Activated CD4-positive, alpha-beta T cell treated with anti-CD3 and anti-CD28 coated beads for 36 hours (primary cell): ENCODE measurements at regions of chr12 and their contacts with region 1.

Region 1: DNA sequence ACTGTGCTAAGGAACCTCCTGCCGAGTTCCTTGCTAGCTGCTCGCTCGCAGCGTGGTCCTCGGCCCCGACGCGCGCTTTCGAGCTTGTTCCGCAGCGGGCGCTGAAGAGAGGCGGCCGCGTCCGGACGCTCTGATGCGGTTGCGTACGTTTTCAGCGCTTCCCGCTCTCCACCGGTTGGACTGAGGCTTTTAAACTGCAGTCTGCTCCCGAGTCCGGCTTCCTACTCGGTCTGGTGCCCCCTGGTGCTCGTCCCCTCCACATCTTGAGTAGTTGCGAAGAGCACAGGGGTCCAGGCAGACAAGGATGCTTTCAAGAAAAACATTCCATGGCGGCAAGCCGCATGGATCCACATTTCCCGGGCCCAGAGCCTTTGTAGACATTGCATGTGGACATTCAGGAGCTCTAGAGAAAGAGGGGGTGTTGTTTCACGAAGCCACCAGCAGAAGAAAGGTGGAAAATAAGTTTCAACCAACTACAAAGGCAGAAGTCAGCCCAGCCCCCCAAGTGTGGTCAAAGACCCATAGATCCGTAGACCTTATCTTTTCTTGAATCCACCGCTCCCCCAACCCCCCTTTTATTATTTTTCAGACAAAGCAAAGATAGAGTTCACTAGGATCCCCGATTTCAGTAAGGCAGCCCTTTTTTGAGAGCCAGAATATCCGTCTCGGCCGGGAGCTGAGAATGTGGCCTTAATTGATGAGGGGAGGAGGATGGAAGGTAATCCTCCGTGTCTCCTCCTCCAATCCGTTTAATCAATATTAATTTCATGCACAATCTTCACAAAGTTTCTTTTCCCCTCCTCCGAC is 984 bp upstream of the WNK1 start:
- DNase-seq: peak; percentile 93
- ATAC-seq: peak; percentile 50
- H3K4me3 Mint-ChIP-seq: no peak overlapping the region
- H3K27ac Mint-ChIP-seq: no peak overlapping the region
- H3K4me1 Mint-ChIP-seq: peaks cover 17% of the 10 kb centered on the region
- H3K27me3 Mint-ChIP-seq: no peaks in the 10 kb centered on the region

Region 2: GRCh38 chr12:401235-402028 is 350.0 kb before region 1 on chr12 and contains the start of gene CCDC77:
- CTCF ChIA-PET with region 1: no interaction called
- POLR2A ChIA-PET with region 1: no interaction called
- intact Hi-C with region 1: loop called in 1 of 2 experiments (anchors 2 kb)
- DNase-seq: peak; percentile 96
- ATAC-seq: peak; percentile 100
- H3K4me3 Mint-ChIP-seq: no peak within 1 kb of the TSS
- H3K27ac Mint-ChIP-seq: no peak within 1 kb of the TSS
- H3K4me1 Mint-ChIP-seq: peaks cover 5% of the 10 kb centered on the region
- H3K27me3 Mint-ChIP-seq: no peaks in the 10 kb centered on the region
- total RNA-seq, gene CCDC77: 17.3 to 18.7 TPM

Region 3: GRCh38 chr12:614411-614970 is 136.9 kb before region 1 on chr12:
- CTCF ChIA-PET with region 1: interaction called, 20 read pairs
- POLR2A ChIA-PET with region 1: no interaction called
- intact Hi-C with region 1: loop called in 1 of 2 experiments (anchors 1 kb)
- DNase-seq: peak; percentile 74
- ATAC-seq: peak; percentile 50
- H3K4me3 Mint-ChIP-seq: no peak overlapping the region
- H3K27ac Mint-ChIP-seq: no peak overlapping the region
- H3K4me1 Mint-ChIP-seq: peaks cover 37% of the 10 kb centered on the region
- H3K27me3 Mint-ChIP-seq: no peaks in the 10 kb centered on the region

Region 4: GRCh38 chr12:666766-667308 is 84.6 kb before region 1 on chr12:
- CTCF ChIA-PET with region 1: interaction called, 33 read pairs
- POLR2A ChIA-PET with region 1: interaction called, 6 read pairs
- intact Hi-C with region 1: loop called (anchors 1 kb)
- DNase-seq: peak; percentile 53
- ATAC-seq: peak; percentile 45
- H3K4me3 Mint-ChIP-seq: peak overlapping the region; percentile 36
- H3K27ac Mint-ChIP-seq: peak overlapping the region; percentile 79
- H3K4me1 Mint-ChIP-seq: peaks cover 86% of the 10 kb centered on the region
- H3K27me3 Mint-ChIP-seq: no peaks in the 10 kb centered on the region

Region 5: GRCh38 chr12:724194-724855 is 27.1 kb before region 1 on chr12:
- CTCF ChIA-PET with region 1: interaction called, 12 read pairs
- POLR2A ChIA-PET with region 1: no interaction called
- intact Hi-C with region 1: loop called in 1 of 2 experiments (anchors 2 kb)
- DNase-seq: peak; percentile 37
- ATAC-seq: peak; percentile 65
- H3K4me3 Mint-ChIP-seq: peak overlapping the region; percentile 3
- H3K27ac Mint-ChIP-seq: peak overlapping the region; percentile 87
- H3K4me1 Mint-ChIP-seq: peaks cover 85% of the 10 kb centered on the region
- H3K27me3 Mint-ChIP-seq: no peaks in the 10 kb centered on the region

Region 6: DNA sequence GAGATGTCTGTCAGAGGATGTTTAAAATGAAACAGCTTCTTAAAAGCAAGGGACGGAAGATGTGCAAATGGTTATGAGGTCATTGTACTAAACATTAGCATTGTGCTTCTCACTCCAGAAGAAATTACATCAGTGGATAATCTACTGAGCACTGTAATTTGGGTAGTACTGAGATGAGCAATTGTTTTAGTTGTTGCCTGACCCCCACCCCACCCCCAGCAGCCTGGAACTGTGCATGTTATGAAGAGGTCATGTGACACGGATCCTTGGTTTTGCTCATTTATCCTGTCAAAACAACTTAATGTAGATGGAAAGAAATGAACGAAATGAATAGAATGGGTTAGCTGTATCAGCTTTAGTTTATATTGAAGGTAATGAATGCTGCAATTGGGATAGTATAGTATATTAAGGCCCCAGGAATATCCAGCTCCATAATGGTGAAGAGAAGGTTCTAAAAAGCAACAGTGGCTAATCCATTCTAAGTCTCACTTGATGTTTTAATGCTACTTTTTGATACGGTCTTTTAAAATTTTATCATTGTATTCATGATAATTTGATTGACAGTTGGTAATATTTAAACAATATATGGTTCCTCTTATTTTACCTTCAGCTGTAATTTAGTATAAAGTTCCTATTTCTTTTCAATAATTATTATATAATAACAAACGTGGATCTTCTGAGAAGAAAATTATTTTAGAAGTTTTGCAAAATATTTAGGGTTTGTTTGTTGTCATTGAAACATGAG is 59.4 kb after region 1 on chr12:
- CTCF ChIA-PET with region 1: interaction called, 102 read pairs
- POLR2A ChIA-PET with region 1: interaction called, 4 read pairs
- intact Hi-C with region 1: loop called (anchors 1 to 2 kb)
- DNase-seq: peak; percentile 84
- ATAC-seq: peak; percentile 95
- H3K4me3 Mint-ChIP-seq: peak overlapping the region; percentile 32
- H3K27ac Mint-ChIP-seq: peak overlapping the region; percentile 78
- H3K4me1 Mint-ChIP-seq: peaks cover 68% of the 10 kb centered on the region
- H3K27me3 Mint-ChIP-seq: no peaks in the 10 kb centered on the region

Region 7: GRCh38 chr12:1044696-1045095 is 293.3 kb after region 1 on chr12:
- CTCF ChIA-PET with region 1: no interaction called
- POLR2A ChIA-PET with region 1: no interaction called
- intact Hi-C with region 1: no loop called
- DNase-seq: no peak
- ATAC-seq: no peak
- H3K4me3 Mint-ChIP-seq: no peak overlapping the region
- H3K27ac Mint-ChIP-seq: no peak overlapping the region
- H3K4me1 Mint-ChIP-seq: peaks cover 14% of the 10 kb centered on the region
- H3K27me3 Mint-ChIP-seq: no peaks in the 10 kb centered on the region

Region 8: GRCh38 chr12:1690578-1691122 is 939.3 kb after region 1 on chr12 and contains the start of gene ADIPOR2:
- CTCF ChIA-PET with region 1: no interaction called
- POLR2A ChIA-PET with region 1: no interaction called
- intact Hi-C with region 1: loop called in 1 of 2 experiments (anchors 1 kb)
- DNase-seq: peak; percentile 96
- ATAC-seq: peak; percentile 99
- H3K4me3 Mint-ChIP-seq: peak within 1 kb of the TSS; percentile 95
- H3K27ac Mint-ChIP-seq: peak within 1 kb of the TSS; percentile 97
- H3K4me1 Mint-ChIP-seq: peaks cover 47% of the 10 kb centered on the region
- H3K27me3 Mint-ChIP-seq: peaks cover 3% of the 10 kb centered on the region
- total RNA-seq, gene ADIPOR2: 51.7 to 52.6 TPM